ENCODE measurements at regions of chr6 and their contacts with region 1.

Region 1: GRCh38 chr6:43143235-43144124 is 27.6 kb upstream of the SRF start:
- DNase-seq: peak; percentile 65 to 90 (median 80)

Region 2: GRCh38 chr6:42901536-42901957 is 241.9 kb before region 1 on chr6:
- intact Hi-C with region 1: loop called (anchors 5 kb)
- DNase-seq: peak; percentile 35 to 91 (median 72)

Region 3: DNA sequence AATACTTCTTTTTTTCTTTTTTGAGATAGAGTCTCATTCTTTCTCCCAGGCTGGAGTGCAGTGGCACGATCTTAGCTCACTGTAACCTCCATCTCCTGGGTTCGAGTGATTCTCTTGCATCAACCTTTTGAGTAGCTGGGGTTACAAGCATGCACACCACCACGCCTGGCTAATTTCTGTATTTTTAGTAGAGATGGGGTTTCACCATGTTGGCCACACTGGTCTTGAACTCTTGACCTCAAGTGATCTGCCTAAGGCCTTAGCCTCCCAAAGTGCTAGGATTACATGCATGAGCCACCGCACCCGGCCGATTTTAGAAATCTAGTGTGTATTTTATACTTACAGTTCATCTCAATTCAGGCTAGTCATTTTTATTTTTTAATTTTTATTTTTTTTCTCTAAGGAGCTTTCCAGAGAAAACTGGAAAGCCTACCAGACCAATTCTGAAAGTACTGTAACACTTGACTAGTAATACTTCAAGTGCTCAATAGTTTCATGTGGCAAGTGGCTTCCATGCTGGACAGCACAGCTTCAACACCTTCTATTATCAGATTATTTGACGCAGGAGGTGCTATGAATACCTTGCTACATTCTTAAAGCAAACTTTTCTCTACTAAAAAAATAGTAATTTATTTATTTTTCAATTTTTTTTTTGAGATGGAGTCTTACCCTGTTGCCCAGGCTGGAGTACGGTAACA is 398.4 kb after region 1 on chr6:
- intact Hi-C with region 1: no loop called
- DNase-seq: no peak